Panc1 (cell line): ENCODE measurements at regions of chr10 and their contacts with region 1.

Region 1: DNA sequence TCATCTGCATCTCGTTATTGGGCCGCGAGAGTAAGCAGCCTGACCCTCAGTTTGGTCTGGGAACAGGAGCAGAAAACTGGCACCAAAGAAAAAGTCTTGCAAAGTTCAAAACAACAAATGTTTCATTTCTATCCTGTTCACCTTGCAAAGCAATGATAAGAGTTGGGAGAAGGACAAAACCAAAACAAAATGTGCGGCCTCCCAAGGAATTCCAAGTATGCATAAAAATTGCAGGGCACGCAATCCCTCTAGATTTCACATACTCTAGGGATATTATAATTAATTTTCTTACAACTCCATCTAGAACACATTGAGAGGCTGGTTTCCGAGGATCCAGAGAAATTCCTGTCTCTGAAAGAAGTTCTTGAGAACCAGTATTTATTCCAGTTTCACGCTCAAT is 20.1 kb downstream of the CHUK start:
- DNase-seq: no peak
- ATAC-seq: no peak
- H3K4me3 ChIP-seq: no peak overlapping the region
- H3K27ac ChIP-seq: no peak overlapping the region
- H3K4me1 ChIP-seq: no peaks in the 10 kb centered on the region
- H3K27me3 ChIP-seq: no peaks in the 10 kb centered on the region
- CTCF ChIP-seq: no peak

Region 2: DNA sequence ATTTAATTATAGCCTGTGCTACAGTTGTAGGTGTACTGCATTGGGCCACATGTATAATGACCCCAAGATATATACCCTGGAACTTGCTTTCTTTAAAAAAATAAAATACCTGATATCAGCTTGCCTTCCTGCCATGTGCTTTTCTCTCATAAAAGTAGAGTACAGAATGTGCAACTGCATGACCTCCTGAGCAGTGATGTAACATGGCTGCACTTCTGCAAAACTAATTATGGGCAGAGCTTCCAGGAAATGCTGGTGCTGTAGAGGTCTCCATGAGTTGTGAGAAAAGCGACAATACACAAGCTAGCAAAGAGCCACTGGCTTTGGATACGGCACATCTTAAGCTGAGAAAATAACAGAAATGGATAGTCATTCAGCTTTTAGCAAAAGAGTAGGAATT is 17.0 kb before region 1 on chr10:
- CTCF ChIA-PET with region 1: no interaction called
- POLR2A ChIA-PET with region 1: no interaction called
- in situ Hi-C with region 1: no loop called
- intact Hi-C with region 1: no loop called
- DNase-seq: no peak
- ATAC-seq: no peak
- H3K4me3 ChIP-seq: no peak overlapping the region
- H3K27ac ChIP-seq: no peak overlapping the region
- H3K4me1 ChIP-seq: peaks cover 3% of the 10 kb centered on the region; the same call in 1 of the 2 replicates
- H3K27me3 ChIP-seq: no peaks in the 10 kb centered on the region
- CTCF ChIP-seq: no peak

Region 3: DNA sequence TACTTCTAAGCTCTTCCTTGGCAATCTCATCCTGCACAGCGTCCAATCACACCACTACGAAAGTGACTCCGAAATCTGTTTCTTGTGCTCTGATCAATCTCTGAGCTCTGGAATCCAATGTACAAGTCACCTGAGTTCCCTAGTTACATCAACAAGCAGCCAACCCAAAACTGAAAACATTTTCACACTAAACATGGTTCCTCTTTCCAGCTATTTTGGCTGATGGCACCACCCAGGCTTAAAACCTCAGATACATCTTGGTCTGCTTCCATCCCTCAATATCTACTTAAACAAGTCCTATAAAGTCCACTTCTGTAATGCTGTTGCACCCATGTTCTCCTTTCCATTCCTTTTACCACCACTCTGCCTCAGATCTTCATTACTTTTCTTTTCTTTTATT is 73.6 kb after region 1 on chr10:
- CTCF ChIA-PET with region 1: no interaction called
- POLR2A ChIA-PET with region 1: interaction called, 10 read pairs
- in situ Hi-C with region 1: no loop called
- intact Hi-C with region 1: no loop called
- DNase-seq: no peak
- ATAC-seq: no peak
- H3K4me3 ChIP-seq: no peak overlapping the region
- H3K27ac ChIP-seq: no peak overlapping the region
- H3K4me1 ChIP-seq: peaks cover 13% of the 10 kb centered on the region
- H3K27me3 ChIP-seq: no peaks in the 10 kb centered on the region
- CTCF ChIP-seq: no peak